ENCODE measurements at regions of chr5 and their contacts with region 1.

Region 1: GRCh38 chr5:6496207-6496584 is 47.5 kb downstream of the UBE2QL1 start:
- DNase-seq: peak; percentile 47
- H3K4me3 Mint-ChIP-seq: no peak overlapping the region
- H3K27ac Mint-ChIP-seq: peak overlapping the region; percentile 74
- H3K4me1 Mint-ChIP-seq: peaks cover 50% of the 10 kb centered on the region
- H3K27me3 Mint-ChIP-seq: peaks cover 24% of the 10 kb centered on the region

Region 2: DNA sequence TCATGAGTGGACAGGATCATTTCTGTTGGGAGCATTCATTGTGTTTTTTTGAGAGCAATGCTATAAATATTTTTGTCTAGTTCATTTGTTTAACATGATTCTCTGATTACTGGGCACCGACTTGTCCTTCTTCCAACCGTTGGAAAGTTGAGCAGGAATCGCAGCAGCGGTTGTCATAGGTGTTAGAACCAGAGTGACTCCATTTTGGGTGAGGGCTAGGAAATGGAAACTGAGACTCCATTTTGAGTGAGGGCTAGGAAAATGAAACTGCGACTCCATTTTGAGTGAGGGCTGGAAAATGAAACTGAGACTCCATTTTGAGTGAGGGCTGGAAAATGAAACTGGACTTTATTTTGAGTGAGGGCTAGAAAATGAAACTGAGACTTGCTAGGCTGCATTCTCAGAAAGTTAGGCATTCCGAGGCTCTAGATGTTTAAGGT is 973.1 kb before region 1 on chr5:
- intact Hi-C with region 1: loop called (anchors 5 kb)
- DNase-seq: peak; percentile 41
- H3K4me3 Mint-ChIP-seq: no peak overlapping the region
- H3K27ac Mint-ChIP-seq: peak overlapping the region; percentile 53
- H3K4me1 Mint-ChIP-seq: peaks cover 26% of the 10 kb centered on the region
- H3K27me3 Mint-ChIP-seq: no peaks in the 10 kb centered on the region

Region 3: DNA sequence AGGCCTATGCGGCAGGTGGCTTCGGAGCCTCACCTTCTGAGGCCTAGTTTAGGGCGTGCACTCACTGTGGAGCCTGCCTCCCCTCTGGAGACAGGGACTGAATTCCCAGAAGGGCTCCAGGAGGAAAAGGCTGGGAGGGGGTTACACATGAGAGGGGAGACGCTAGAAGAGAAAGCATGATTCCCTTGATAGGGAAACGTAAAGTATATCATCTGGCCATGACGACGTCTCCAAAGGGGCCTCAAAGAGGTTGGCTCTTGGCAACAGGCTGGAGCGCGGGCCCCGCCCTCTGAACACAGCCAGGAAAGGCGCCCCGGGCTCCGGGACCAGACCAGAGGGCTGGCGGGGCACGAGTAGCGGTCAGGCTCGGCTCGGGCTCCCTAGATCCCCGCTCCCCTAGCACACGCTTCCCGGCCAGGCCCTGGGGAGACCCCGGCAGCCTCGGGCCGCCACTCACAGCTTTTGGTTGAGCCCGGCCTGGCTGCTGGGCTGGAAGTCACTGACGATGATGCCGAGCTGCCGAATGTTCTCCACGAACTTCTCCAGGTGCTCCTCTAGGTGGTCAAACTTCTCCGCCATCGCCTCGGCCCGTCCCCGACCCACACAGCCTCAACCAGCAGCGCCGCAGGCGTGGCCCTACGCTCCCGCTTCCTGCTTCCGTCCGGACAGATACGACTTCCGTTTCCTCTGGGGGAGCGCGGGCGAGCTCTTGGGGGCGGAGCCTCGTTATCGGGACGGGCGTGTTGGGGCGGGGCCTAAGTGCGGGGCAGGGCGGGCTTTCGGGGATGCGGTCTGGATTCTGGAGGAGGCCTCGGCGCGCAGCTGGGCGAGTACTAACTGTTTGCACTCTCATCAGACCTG is 118.1 kb before region 1 on chr5 and contains the start of gene MED10:
- intact Hi-C with region 1: loop called (anchors 1 kb)
- DNase-seq: peak; percentile 95
- H3K4me3 Mint-ChIP-seq: peak within 1 kb of the TSS; percentile 96
- H3K27ac Mint-ChIP-seq: peak within 1 kb of the TSS; percentile 93
- H3K4me1 Mint-ChIP-seq: peaks cover 37% of the 10 kb centered on the region
- H3K27me3 Mint-ChIP-seq: peaks cover 3% of the 10 kb centered on the region
- total RNA-seq, gene MED10: 53.3 and 56.5 TPM in 2 replicates

Region 4: DNA sequence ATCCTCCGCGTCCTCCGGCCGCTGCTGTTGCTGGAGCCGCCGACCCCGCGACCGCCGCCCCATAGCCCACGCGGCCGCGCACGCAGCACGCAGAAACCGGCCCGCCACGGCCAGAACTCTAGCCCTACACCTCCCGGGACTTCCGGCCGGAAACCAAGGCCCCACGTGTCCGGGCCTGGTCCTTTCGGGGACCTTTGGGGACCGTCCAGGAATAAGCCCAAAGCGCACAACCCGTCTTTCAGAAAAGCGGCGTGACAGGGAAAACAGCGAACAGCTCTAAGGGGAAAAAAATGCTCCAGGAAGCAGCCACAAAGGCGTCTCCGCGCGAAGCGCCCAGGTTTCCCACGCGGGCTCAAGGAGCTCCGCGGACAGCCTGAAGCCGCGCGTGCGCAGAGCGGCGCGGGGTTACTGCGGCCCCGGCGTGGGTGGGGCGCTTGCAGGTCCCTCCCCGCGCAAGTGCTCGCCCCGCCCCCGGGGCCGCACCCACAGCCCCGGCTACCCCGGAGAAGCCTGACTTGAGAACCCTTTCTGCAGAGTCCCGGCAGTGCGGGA is 136.8 kb after region 1 on chr5 and contains the starts of genes NSUN2 and SRD5A1:
- intact Hi-C with region 1: loop called (anchors 5 kb)
- DNase-seq: peak; percentile 89
- H3K4me3 Mint-ChIP-seq: peak within 1 kb of the TSS; percentile 94
- H3K27ac Mint-ChIP-seq: peak within 1 kb of the TSS; percentile 98
- H3K4me1 Mint-ChIP-seq: peaks cover 28% of the 10 kb centered on the region
- H3K27me3 Mint-ChIP-seq: no peaks in the 10 kb centered on the region
- total RNA-seq, gene NSUN2: 124 and 125 TPM in 2 replicates
- total RNA-seq, gene SRD5A1: 15.3 and 16.0 TPM in 2 replicates

Region 5: GRCh38 chr5:7868773-7869473 is 1372.7 kb after region 1 on chr5 and contains the starts of genes FASTKD3 and MTRR:
- intact Hi-C with region 1: loop called (anchors 10 kb)
- DNase-seq: peak; percentile 87
- H3K4me3 Mint-ChIP-seq: peak within 1 kb of the TSS; percentile 99
- H3K27ac Mint-ChIP-seq: peak within 1 kb of the TSS; percentile 83
- H3K4me1 Mint-ChIP-seq: peaks cover 62% of the 10 kb centered on the region
- H3K27me3 Mint-ChIP-seq: no peaks in the 10 kb centered on the region
- total RNA-seq, gene FASTKD3: 11.6 and 12.7 TPM in 2 replicates
- total RNA-seq, gene MTRR: 61.9 and 71.4 TPM in 2 replicates